Activated T-helper 1 cell treated with anti-CD3 and anti-CD28 coated beads, Interleukin-12 subunit alpha, Interleukin-12 subunit beta, Interleukin-2, Interleukin-4 antibody, amounts not matched to agents 30 ng/mL and 10 ng/mL and 1 ng/mL, durations not matched to agents 14 hours and 24 hours and 36 hours (primary cell): ENCODE measurements at regions of chr7 and their contacts with region 1.

Region 1: DNA sequence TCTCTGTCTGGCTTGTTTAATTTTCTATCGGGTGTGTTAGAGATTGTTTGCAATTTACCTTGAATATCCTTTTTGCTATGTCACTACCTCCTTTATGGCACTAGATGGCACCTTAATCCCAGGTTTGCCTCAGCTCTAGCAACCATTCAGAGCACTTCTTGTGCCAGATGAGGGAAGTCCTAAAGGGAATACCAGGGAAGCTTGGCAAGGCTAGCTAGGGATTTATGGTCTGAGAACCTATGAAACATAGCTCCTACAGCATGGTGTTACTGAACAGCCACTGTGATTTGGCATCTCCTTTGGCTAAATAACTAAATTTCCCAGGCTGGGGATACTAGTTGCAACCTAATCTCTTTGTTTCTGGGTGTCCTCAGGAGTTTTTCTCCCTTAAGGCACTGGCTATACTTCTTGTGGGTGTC is 69.0 kb upstream of the VOPP1 start:
- DNase-seq: peak; percentile 11
- H3K4me3 Mint-ChIP-seq: no peak overlapping the region
- H3K27ac Mint-ChIP-seq: no peak overlapping the region
- H3K4me1 Mint-ChIP-seq: peaks cover 11% of the 10 kb centered on the region
- H3K27me3 Mint-ChIP-seq: peaks cover 7% of the 10 kb centered on the region

Region 2: DNA sequence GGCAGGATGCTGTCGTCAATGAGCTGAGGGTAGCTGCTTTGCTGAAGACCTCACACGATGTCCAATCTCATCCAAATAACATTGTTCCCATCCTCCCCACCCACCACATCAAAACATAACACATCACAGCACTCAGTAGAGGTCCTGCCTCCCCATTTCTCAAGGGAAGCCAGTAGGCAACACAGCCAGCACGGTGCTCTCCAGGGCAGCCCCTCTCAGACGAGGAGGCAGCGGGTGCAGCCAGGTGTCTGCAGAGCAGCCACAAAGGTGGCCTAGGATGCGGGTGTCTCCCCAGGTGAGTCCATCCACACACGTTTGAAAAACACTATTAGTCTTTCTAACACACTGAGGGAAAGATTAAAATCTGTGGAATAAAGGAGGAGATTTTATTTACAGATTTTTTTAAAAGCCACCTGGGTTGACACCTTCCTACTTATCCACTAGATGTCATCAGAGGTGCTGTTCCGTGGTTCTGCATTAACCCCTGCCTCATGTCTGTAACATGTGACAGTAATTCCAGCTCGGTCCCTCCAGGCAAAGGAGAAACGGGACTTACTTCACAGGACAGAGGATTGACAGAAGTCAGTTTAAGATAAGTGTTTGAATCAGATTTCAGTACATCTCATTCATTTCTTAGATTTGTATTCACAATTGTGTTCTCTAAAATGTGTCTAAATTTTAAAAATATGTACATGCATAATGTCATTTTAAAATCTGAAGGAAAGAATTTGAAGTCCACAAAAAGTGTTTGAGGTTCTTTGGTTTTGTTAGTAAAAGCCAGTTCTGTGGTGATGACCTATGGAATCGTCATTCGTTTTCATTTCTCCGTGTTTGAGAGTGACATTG is 208.1 kb before region 1 on chr7:
- intact Hi-C with region 1: no loop called
- DNase-seq: no peak
- H3K4me3 Mint-ChIP-seq: no peak overlapping the region
- H3K27ac Mint-ChIP-seq: peak overlapping the region; percentile 27
- H3K4me1 Mint-ChIP-seq: peaks cover 34% of the 10 kb centered on the region
- H3K27me3 Mint-ChIP-seq: no peaks in the 10 kb centered on the region

Region 3: DNA sequence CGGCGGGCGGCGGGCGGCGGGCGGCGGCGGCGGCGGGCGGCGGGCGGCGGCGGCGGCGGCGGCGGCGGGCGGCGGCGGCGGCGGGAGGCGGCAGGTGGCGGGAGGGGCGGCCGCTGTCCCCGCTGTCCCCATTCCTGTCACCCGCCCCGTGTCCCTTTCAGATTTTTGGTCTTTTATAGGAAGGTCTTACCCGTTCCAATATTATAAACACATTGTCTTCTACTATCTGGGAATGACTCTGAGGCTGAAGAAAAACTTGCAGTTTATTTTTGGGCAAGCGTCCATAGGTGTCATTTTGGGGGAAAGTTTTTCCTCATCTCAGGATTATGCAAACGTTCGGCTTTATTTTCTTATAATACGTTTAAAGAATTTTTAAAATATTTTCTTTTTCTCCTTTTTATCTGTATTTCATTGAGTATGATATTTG is 246.6 kb after region 1 on chr7:
- intact Hi-C with region 1: loop called (anchors 5 kb)
- DNase-seq: no peak
- H3K4me3 Mint-ChIP-seq: peak overlapping the region; percentile 87
- H3K27ac Mint-ChIP-seq: peak overlapping the region; percentile 84
- H3K4me1 Mint-ChIP-seq: peaks cover 5% of the 10 kb centered on the region
- H3K27me3 Mint-ChIP-seq: peaks cover 2% of the 10 kb centered on the region

Region 4: GRCh38 chr7:55964261-55965099 is 323.2 kb after region 1 on chr7 and contains the start of gene NIPSNAP2:
- intact Hi-C with region 1: loop called (anchors 1 kb)
- DNase-seq: peak; percentile 55
- H3K4me3 Mint-ChIP-seq: peak within 1 kb of the TSS; percentile 88
- H3K27ac Mint-ChIP-seq: peak within 1 kb of the TSS; percentile 89
- H3K4me1 Mint-ChIP-seq: peaks cover 26% of the 10 kb centered on the region
- H3K27me3 Mint-ChIP-seq: no peaks in the 10 kb centered on the region
- total RNA-seq, gene NIPSNAP2: 49.4 and 50.0 TPM in 2 replicates

Region 5: GRCh38 chr7:56003749-56004148 is 362.5 kb after region 1 on chr7:
- intact Hi-C with region 1: loop called (anchors 1 kb)
- DNase-seq: no peak
- H3K4me3 Mint-ChIP-seq: no peak overlapping the region
- H3K27ac Mint-ChIP-seq: no peak overlapping the region
- H3K4me1 Mint-ChIP-seq: peaks cover 15% of the 10 kb centered on the region
- H3K27me3 Mint-ChIP-seq: no peaks in the 10 kb centered on the region